ENCODE measurements at regions of chr16 and their contacts with region 1.

Region 1: DNA sequence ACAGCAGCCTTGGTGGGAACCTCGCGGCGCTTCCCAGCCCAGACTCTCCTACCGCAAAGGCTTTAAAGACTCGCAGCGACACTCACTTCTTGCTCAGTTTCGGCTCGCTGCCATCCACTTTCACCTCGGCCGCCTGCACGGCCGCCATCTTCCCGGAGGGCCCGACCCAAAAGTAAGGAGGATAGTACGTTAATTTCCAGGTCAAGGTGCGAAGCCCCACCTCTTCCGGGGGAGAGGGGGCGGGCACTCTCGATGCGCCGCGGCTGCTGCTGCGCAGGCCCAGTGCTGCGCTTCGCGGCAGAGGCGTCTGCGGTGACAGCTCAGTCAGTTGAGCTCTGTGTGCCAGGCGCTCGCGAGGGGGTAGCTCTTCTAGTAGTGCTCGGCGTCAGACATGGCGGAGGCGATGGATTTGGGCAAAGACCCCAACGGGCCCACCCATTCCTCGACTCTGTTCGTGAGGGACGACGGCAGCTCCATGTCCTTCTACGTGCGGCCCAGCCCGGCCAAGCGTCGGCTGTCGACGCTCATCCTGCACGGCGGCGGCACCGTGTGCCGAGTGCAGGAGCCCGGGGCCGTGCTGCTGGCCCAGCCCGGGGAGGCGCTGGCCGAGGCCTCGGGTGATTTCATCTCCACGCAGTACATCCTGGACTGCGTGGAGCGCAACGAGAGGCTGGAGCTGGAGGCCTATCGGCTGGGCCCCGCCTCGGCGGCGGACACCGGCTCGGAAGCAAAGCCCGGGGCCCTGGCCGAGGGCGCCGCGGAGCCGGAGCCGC is at the starts of genes KARS1 and TERF2IP:
- DNase-seq: peak; percentile 92
- ATAC-seq: peak; percentile 97
- H3K4me3 ChIP-seq: peak within 1 kb of the TSS; percentile 82 to 96 (median 93)
- H3K27ac ChIP-seq: peak within 1 kb of the TSS; percentile 93
- H3K4me1 ChIP-seq: peaks cover 58% of the 10 kb centered on the region
- H3K27me3 ChIP-seq: no peaks in the 10 kb centered on the region; a peak in 1 of 5 replicates
- CTCF ChIP-seq: no peak
- EP300 ChIP-seq: 0 out of 4 replicates have a peak, but pooled peaks of 1 of the 2 experiments have one; percentile 27
- POLR2A ChIP-seq: peak; percentile 97 to 98
- RAD21 ChIP-seq: peak; percentile 36
- total RNA-seq, gene KARS1: 276 and 379 TPM in 2 replicates
- total RNA-seq, gene TERF2IP: 50.2 and 53.1 TPM in 2 replicates

Region 2: GRCh38 chr16:75342308-75342829 is 305.3 kb before region 1 on chr16:
- CTCF ChIA-PET with region 1: no interaction called
- POLR2A ChIA-PET with region 1: no interaction called
- in situ Hi-C with region 1: no loop called
- intact Hi-C with region 1: no loop called
- DNase-seq: no peak
- ATAC-seq: no peak
- H3K4me3 ChIP-seq: no peak overlapping the region
- H3K27ac ChIP-seq: no peak overlapping the region
- H3K4me1 ChIP-seq: no peaks in the 10 kb centered on the region
- H3K27me3 ChIP-seq: no peaks in the 10 kb centered on the region
- CTCF ChIP-seq: no peak
- EP300 ChIP-seq: no peak
- POLR2A ChIP-seq: no peak
- RAD21 ChIP-seq: no peak

Region 3: GRCh38 chr16:75432828-75433731 is 214.6 kb before region 1 on chr16 and contains the start of gene CFDP1:
- CTCF ChIA-PET with region 1: no interaction called
- POLR2A ChIA-PET with region 1: interaction called, 12 read pairs
- in situ Hi-C with region 1: no loop called
- intact Hi-C with region 1: no loop called
- DNase-seq: peak; percentile 94
- ATAC-seq: peak; percentile 93
- H3K4me3 ChIP-seq: peak within 1 kb of the TSS; percentile 76 to 95 (median 78)
- H3K27ac ChIP-seq: peak within 1 kb of the TSS; percentile 94
- H3K4me1 ChIP-seq: peaks cover 58% of the 10 kb centered on the region
- H3K27me3 ChIP-seq: no peaks in the 10 kb centered on the region; a peak in 1 of 5 replicates
- CTCF ChIP-seq: peak; percentile 49
- EP300 ChIP-seq: peak in 1 of 2 experiments; percentile 11; a peak in 1 of 4 replicates
- POLR2A ChIP-seq: peak; percentile 81 to 88
- RAD21 ChIP-seq: peak; percentile 23; the same call in 1 of the 2 replicates
- total RNA-seq, gene CFDP1: 153 and 198 TPM in 2 replicates

Region 4: DNA sequence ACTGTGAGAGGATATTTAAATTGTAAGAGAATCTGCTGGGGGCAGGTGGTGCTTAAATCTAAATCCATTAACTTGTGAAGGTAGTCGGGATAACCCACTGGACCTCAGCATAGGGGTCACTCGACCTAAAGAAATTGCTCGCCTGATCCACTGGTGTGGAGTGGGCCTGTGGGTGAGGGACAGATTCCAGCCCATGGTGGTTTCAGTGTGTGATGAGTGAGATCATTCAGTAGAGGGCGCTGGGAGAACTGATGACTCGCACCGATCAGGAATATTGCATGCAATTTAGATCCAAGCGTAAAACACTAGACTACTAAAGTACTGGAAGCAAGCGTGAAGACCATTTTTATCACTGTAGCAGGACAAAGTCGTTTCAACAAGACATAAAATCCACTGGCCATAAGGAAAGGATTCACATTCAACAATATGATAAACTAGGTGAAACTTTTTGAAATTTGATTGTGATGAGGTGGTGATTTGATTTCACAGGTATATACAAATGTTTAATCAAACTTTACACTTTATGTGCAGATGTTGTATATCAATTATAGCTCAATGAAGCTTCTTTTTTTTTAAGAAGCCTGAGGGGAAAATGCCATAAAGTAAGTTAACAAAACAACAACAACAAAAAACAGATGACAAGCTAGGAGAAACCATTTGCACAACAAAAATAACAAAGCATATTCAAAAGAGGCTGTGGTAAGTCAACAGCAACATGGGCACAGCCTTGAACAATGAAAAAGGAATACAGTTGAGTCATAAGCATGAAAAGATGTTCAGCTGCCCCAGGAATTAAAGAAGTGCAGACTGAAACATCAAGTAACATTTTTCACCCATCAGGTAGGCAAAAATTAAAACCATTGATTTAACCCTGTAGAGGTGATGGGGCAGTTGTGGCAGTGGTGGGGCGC is 175.7 kb before region 1 on chr16:
- CTCF ChIA-PET with region 1: interaction called, 3 read pairs
- POLR2A ChIA-PET with region 1: no interaction called
- in situ Hi-C with region 1: no loop called
- intact Hi-C with region 1: loop called (anchors 2 kb)
- DNase-seq: peak; percentile 61
- ATAC-seq: peak; percentile 94
- H3K4me3 ChIP-seq: no peak overlapping the region
- H3K27ac ChIP-seq: no peak overlapping the region
- H3K4me1 ChIP-seq: peaks cover 6% of the 10 kb centered on the region
- H3K27me3 ChIP-seq: no peaks in the 10 kb centered on the region; a peak in 1 of 5 replicates
- CTCF ChIP-seq: peak; percentile 94
- EP300 ChIP-seq: no peak
- POLR2A ChIP-seq: no peak
- RAD21 ChIP-seq: peak; percentile 77

Region 5: GRCh38 chr16:75566040-75566810 is 81.5 kb before region 1 on chr16 and contains the start of gene GABARAPL2:
- CTCF ChIA-PET with region 1: no interaction called
- POLR2A ChIA-PET with region 1: interaction called, 5 read pairs
- in situ Hi-C with region 1: no loop called
- intact Hi-C with region 1: loop called (anchors 5 kb)
- DNase-seq: peak; percentile 70
- ATAC-seq: peak; percentile 86
- H3K4me3 ChIP-seq: peak within 1 kb of the TSS; percentile 87 to 96 (median 88)
- H3K27ac ChIP-seq: peak within 1 kb of the TSS; percentile 34
- H3K4me1 ChIP-seq: peaks cover 28% of the 10 kb centered on the region
- H3K27me3 ChIP-seq: peaks cover 0 to 4% of the 10 kb centered on the region in 2 experiments; a peak in 2 of 5 replicates
- CTCF ChIP-seq: no peak; the same call in 1 of the 2 replicates
- EP300 ChIP-seq: no peak; a peak in 1 of 4 replicates
- POLR2A ChIP-seq: peak; percentile 16 to 81; a peak in 2 of 4 replicates
- RAD21 ChIP-seq: peak; percentile 33; the same call in 1 of the 2 replicates
- total RNA-seq, gene GABARAPL2: 76.4 and 82.4 TPM in 2 replicates

Region 6: GRCh38 chr16:75622761-75623605 is 24.7 kb before region 1 on chr16 and contains the start of gene ADAT1:
- CTCF ChIA-PET with region 1: no interaction called
- POLR2A ChIA-PET with region 1: interaction called, 28 read pairs
- in situ Hi-C with region 1: no loop called
- intact Hi-C with region 1: no loop called
- DNase-seq: peak; percentile 97
- ATAC-seq: peak; percentile 95
- H3K4me3 ChIP-seq: peak within 1 kb of the TSS; percentile 80 to 86 (median 86)
- H3K27ac ChIP-seq: peak within 1 kb of the TSS; percentile 69
- H3K4me1 ChIP-seq: peaks cover 34% of the 10 kb centered on the region
- H3K27me3 ChIP-seq: no peaks in the 10 kb centered on the region; a peak in 1 of 5 replicates
- CTCF ChIP-seq: peak; percentile 15; the same call in 1 of the 2 replicates
- EP300 ChIP-seq: no peak
- POLR2A ChIP-seq: peak; percentile 88 to 89
- RAD21 ChIP-seq: peak; percentile 53
- total RNA-seq, gene ADAT1: 40.8 and 50.7 TPM in 2 replicates

Region 7: GRCh38 chr16:75632857-75633256 is 14.8 kb before region 1 on chr16:
- CTCF ChIA-PET with region 1: no interaction called
- POLR2A ChIA-PET with region 1: interaction called, 11 read pairs
- in situ Hi-C with region 1: no loop called
- intact Hi-C with region 1: no loop called
- DNase-seq: no peak
- ATAC-seq: no peak
- H3K4me3 ChIP-seq: no peak overlapping the region
- H3K27ac ChIP-seq: no peak overlapping the region
- H3K4me1 ChIP-seq: peaks cover 10% of the 10 kb centered on the region; the same call in 1 of the 2 replicates
- H3K27me3 ChIP-seq: no peaks in the 10 kb centered on the region
- CTCF ChIP-seq: no peak
- EP300 ChIP-seq: no peak
- POLR2A ChIP-seq: no peak
- RAD21 ChIP-seq: no peak

Region 8: DNA sequence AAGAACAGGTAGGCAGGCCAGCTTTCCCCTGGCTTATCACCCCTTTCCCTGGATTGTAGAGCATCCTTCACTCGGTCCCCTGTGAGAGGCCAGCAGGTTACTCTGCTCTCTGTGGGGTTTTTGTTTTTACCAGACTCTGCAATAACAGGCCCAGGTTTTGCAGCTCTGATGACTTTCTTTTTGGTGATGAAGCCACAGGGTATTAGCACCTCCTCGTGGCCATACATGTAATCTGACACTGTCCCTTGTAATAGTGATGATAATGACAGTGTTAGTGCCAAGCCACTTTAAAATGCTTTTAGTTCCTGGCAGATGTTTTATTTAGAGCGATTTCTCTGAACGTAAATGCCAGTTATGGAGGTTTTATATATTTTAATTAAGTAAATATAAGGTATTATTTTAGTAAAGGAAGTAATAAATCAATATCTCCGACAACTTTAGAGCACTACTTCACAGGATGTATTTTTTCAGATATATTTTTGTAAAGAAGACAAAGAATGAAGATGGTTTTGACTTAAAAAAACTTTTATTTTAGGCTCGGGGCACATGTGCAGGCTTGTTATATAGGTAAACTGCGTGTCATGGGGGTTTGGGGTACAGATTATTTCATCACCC is 116.6 kb after region 1 on chr16:
- CTCF ChIA-PET with region 1: interaction called, 4 read pairs
- POLR2A ChIA-PET with region 1: no interaction called
- in situ Hi-C with region 1: loop called (anchors 5 kb)
- intact Hi-C with region 1: loop called (anchors 1 kb)
- DNase-seq: peak; percentile 69
- ATAC-seq: peak; percentile 98
- H3K4me3 ChIP-seq: no peak overlapping the region
- H3K27ac ChIP-seq: no peak overlapping the region
- H3K4me1 ChIP-seq: no peaks in the 10 kb centered on the region
- H3K27me3 ChIP-seq: no peaks in the 10 kb centered on the region
- CTCF ChIP-seq: peak; percentile 91
- EP300 ChIP-seq: no peak
- POLR2A ChIP-seq: no peak
- RAD21 ChIP-seq: peak; percentile 86

Measured in HepG2 (cell line).